Calu3 (cell line): ENCODE measurements at regions of chr11 and their contacts with region 1.

Region 1: DNA sequence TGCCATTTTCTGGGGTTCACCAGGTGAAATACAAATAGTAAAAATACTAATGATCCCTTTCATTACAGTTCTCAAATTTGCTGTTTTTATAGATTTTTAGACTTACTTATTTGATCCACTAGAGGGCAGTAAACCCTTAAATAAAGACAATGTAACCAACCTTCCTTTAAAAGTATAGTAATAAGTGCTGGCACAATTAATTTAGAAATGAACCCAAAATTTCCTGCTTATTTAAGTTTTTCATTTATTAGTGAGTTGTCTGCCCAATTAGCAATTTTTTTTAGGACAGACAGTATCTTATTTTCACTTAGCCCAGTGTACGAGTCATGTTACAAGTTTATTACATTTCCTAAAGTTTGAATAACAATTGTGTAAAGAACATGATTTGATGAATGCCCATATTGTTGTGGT is 4.7 kb downstream of the DDIAS start:
- DNase-seq: no peak
- H3K4me3 Mint-ChIP-seq: no peak overlapping the region
- H3K27ac Mint-ChIP-seq: no peak overlapping the region
- H3K4me1 Mint-ChIP-seq: peaks cover 16% of the 10 kb centered on the region
- H3K27me3 Mint-ChIP-seq: no peaks in the 10 kb centered on the region
- CTCF ChIP-seq: peak; percentile 21

Region 2: GRCh38 chr11:83071567-83072349 is 165.5 kb after region 1 on chr11 and contains the start of gene RAB30:
- CTCF ChIA-PET with region 1: interaction called, 10 read pairs
- intact Hi-C with region 1: loop called (anchors 5 kb)
- DNase-seq: peak; percentile 88
- H3K4me3 Mint-ChIP-seq: no peak within 1 kb of the TSS
- H3K27ac Mint-ChIP-seq: no peak within 1 kb of the TSS
- H3K4me1 Mint-ChIP-seq: no peaks in the 10 kb centered on the region
- H3K27me3 Mint-ChIP-seq: no peaks in the 10 kb centered on the region
- CTCF ChIP-seq: no peak
- total RNA-seq, gene RAB30: 1.5 and 2.2 TPM in 2 replicates

Region 3: DNA sequence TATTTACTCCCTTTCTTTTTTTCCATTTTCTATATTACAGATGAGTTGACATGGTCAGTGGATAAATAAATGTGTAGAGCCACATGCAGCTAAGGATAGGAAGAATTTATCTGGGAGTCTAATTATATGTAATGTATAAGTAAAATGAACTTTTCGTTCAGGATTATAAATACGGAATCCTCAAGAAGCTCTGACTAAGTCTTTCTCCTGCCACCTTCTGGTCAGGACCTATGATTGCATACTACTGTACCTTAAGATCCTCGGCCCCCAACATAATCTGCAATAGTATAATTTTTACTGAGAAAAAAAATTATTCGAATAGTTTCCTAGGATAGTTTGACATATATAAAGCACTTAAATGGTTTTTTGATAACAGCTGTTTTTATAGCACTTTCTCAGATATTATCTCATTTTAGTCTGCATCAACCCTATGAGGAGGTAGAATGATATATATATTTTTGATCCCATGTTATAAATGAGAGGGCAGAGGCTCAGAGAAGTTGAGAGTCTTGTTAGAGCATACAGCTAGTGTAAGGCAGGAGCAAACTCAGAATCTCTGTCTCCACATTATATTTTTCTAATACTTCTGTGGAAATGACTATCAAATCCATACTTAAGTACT is 343.8 kb after region 1 on chr11:
- CTCF ChIA-PET with region 1: no interaction called
- intact Hi-C with region 1: loop called (anchors 2 kb)
- DNase-seq: no peak
- H3K4me3 Mint-ChIP-seq: no peak overlapping the region
- H3K27ac Mint-ChIP-seq: no peak overlapping the region
- H3K4me1 Mint-ChIP-seq: peaks cover 4% of the 10 kb centered on the region
- H3K27me3 Mint-ChIP-seq: no peaks in the 10 kb centered on the region
- CTCF ChIP-seq: no peak